ENCODE measurements at regions of chr5 and their contacts with region 1.

Region 1: DNA sequence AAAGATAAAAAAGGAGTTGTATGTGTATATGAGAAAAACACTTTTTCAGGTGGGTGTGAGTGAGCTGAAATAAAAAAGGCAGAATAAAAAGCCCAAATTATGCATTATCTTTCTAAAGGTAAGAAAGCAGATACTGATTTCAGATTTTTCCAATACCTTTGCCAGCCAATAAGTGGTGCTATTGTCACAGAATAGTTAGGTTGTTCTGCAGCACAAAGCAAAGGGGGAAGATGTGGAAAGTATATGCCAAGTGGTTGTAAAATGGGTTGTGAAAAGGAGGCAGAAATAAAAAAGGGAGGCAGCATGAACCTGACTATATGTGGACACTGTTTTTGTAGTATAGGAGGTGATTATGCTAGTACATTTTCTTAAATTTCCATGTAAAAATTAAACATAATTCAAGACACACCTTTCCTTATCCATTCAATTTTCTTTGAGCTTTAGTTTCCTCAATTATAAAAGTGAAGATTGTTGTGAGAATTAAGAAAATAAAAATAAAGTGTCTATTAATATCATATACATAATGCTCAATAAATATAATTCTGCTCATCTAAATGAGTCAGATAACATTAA is 106.7 kb downstream of the SMIM15 start:
- DNase-seq: peak; percentile 10 to 35 (median 16)
- ATAC-seq: peak; percentile 75
- H3K4me3 ChIP-seq: no peak overlapping the region
- H3K27ac ChIP-seq: no peak overlapping the region
- H3K4me1 ChIP-seq: no peaks in the 10 kb centered on the region
- H3K27me3 ChIP-seq: no peaks in the 10 kb centered on the region
- CTCF ChIP-seq: peak; percentile 49 to 77 (median 59); a peak in 5 of 6 replicates
- EP300 ChIP-seq: no peak
- POLR2A ChIP-seq: no peak
- RAD21 ChIP-seq: peak; percentile 81 to 85

Region 2: DNA sequence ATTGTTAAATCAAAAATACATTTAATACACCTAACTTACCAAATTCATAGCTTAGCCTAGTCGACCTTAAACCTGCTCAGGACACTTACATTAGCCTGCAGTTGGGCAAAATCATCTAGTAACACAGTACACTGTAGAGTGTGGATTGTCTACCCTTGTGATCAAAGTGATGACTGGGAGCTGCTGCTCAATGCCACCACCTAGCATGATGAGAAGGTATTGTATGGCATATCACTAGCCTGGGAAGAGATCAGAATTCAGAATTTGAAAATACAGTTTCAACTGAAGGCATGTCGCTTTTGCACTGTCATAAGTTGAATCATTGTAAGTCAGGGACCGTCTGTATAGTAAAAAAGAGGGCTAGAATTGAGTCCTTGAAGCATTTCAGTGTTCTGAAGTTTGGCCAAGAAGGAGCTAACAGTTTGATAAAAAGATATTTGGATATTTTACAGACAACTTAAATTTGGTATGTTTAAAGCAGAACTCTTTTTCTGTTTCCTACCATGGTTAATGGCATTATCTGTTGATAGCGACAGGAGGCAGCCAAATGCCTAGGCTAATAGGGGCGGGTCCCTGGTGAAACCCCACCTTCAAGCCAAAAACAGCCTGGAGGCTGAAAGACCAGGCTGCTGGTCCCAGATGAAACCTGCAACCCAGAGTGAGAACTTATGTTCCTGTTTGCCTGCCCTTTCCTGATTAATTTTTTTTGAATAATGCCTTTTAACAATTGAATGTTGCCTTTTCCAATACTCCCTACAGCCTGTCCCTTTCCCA is 83.8 kb after region 1 on chr5:
- CTCF ChIA-PET with region 1: no interaction called
- POLR2A ChIA-PET with region 1: no interaction called
- in situ Hi-C with region 1: no loop called
- intact Hi-C with region 1: loop called (anchors 2 kb)
- DNase-seq: peak in 2 of 4 experiments; percentile 20
- ATAC-seq: peak; percentile 91
- H3K4me3 ChIP-seq: no peak overlapping the region
- H3K27ac ChIP-seq: no peak overlapping the region
- H3K4me1 ChIP-seq: no peaks in the 10 kb centered on the region; a peak in 1 of 5 replicates
- H3K27me3 ChIP-seq: no peaks in the 10 kb centered on the region
- CTCF ChIP-seq: peak; percentile 26 to 52 (median 41); a peak in 4 of 6 replicates
- EP300 ChIP-seq: no peak
- POLR2A ChIP-seq: no peak
- RAD21 ChIP-seq: peak in 1 of 2 experiments; percentile 60; a peak in 2 of 4 replicates

Region 3: DNA sequence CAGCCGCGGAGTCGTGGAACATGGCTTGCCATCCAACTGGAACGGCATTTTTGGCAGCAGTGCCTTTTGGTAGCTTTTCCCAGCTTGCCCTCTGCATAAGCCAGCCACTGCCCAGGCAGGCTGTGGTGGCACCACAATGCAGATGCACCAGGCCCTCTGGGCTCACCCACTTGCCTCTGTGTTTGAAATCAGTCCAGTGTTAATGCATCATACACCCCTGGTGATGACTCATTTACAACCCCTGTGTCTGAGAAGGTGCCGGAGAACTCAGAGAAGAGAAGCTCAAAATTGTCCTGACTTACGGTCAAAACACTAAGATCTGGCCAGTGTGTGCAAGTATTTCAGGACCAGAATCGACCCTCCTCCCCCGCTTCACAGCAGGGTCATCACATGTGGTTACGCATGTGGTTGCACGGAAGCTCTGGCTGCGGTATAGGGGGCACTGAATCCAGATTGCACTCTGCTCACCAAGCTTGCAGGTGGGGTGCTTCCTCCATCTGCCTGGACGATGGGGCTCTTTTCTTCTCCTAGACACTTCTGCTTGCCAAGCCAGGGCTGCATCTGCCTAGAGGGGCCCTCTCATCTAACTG is 173.3 kb after region 1 on chr5:
- CTCF ChIA-PET with region 1: no interaction called
- POLR2A ChIA-PET with region 1: no interaction called
- in situ Hi-C with region 1: no loop called
- intact Hi-C with region 1: loop called (anchors 10 kb)
- DNase-seq: peak in 1 of 4 experiments; percentile 3
- ATAC-seq: peak; percentile 31
- H3K4me3 ChIP-seq: no peak overlapping the region
- H3K27ac ChIP-seq: no peak overlapping the region
- H3K4me1 ChIP-seq: peaks cover 0 to 7% of the 10 kb centered on the region in 2 experiments; a peak in 1 of 5 replicates
- H3K27me3 ChIP-seq: peaks cover 6 to 19% of the 10 kb centered on the region in 2 experiments
- CTCF ChIP-seq: no peak
- EP300 ChIP-seq: no peak
- POLR2A ChIP-seq: no peak
- RAD21 ChIP-seq: no peak

Region 4: DNA sequence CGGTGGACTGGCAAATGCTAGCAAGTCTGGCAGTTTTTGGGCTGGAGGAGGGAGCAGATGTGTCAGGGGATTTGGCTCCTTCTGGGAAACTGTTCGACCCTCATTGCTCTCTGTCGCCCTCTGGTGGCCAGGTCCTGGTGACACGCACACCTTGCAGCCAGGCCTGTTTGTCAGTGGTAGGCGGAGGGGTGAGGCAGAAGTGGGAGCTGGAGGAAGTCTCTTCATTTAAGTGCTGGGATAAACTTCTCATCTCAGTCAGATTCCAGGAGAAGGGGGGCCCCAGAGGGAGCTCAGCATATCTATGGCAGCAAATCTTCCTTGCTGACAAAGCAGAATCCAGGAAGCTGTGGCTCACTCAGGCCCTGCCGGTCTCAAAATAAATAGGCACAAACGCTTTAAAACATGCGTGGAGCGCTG is 603.1 kb after region 1 on chr5:
- CTCF ChIA-PET with region 1: interaction called, 7 read pairs
- POLR2A ChIA-PET with region 1: no interaction called
- in situ Hi-C with region 1: no loop called
- intact Hi-C with region 1: loop called (anchors 5 kb)
- DNase-seq: peak; percentile 71 to 86 (median 82)
- ATAC-seq: peak; percentile 97
- H3K4me3 ChIP-seq: no peak overlapping the region
- H3K27ac ChIP-seq: no peak overlapping the region
- H3K4me1 ChIP-seq: no peaks in the 10 kb centered on the region
- H3K27me3 ChIP-seq: peaks cover 10 to 37% of the 10 kb centered on the region in 2 experiments; a peak in 4 of 5 replicates
- CTCF ChIP-seq: peak; percentile 80 to 93 (median 83)
- EP300 ChIP-seq: no peak
- POLR2A ChIP-seq: no peak
- RAD21 ChIP-seq: peak; percentile 68 to 83

Measured in K562 (cell line).